ENCODE measurements at regions of chr2 and their contacts with region 1.

Region 1: DNA sequence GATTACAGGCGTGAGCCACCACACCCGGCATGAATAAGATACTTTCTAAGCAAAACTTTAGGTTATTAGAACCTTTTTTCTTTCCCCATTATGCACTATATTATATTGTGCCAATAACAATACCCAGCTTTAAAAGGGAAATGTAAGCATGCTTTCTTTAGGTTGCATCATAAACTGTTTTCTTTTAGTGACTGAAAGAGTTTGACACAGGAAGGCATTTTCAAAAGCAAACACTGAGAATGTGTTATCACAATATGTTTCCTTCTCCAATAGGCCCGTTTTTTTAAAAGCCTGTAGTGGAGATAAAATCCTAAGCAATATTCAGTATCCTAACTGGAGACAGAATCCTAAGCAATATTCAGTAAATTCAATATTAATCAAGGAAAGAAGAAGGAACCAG is 16.7 kb upstream of the EPB41L5 start:
- DNase-seq: no peak
- ATAC-seq: no peak
- H3K4me3 ChIP-seq: no peak overlapping the region
- H3K27ac ChIP-seq: no peak overlapping the region
- H3K4me1 ChIP-seq: no peaks in the 10 kb centered on the region
- H3K27me3 ChIP-seq: no peaks in the 10 kb centered on the region
- CTCF ChIP-seq: no peak
- EP300 ChIP-seq: no peak
- POLR2A ChIP-seq: no peak
- RAD21 ChIP-seq: no peak

Region 2: GRCh38 chr2:120052597-120052996 is 56.4 kb after region 1 on chr2:
- CTCF ChIA-PET with region 1: no interaction called
- POLR2A ChIA-PET with region 1: interaction called, 11 read pairs
- RAD21 ChIA-PET with region 1: no interaction called
- SMC1A ChIA-PET with region 1: no interaction called
- in situ Hi-C with region 1: no loop called
- intact Hi-C with region 1: no loop called
- DNase-seq: no peak
- ATAC-seq: no peak
- H3K4me3 ChIP-seq: no peak overlapping the region
- H3K27ac ChIP-seq: no peak overlapping the region
- H3K4me1 ChIP-seq: no peaks in the 10 kb centered on the region
- H3K27me3 ChIP-seq: no peaks in the 10 kb centered on the region
- CTCF ChIP-seq: no peak
- EP300 ChIP-seq: no peak
- POLR2A ChIP-seq: no peak
- RAD21 ChIP-seq: no peak

Measured in GM12878 (cell line).